ENCODE measurements at regions of chr12 and their contacts with region 1.

Region 1: DNA sequence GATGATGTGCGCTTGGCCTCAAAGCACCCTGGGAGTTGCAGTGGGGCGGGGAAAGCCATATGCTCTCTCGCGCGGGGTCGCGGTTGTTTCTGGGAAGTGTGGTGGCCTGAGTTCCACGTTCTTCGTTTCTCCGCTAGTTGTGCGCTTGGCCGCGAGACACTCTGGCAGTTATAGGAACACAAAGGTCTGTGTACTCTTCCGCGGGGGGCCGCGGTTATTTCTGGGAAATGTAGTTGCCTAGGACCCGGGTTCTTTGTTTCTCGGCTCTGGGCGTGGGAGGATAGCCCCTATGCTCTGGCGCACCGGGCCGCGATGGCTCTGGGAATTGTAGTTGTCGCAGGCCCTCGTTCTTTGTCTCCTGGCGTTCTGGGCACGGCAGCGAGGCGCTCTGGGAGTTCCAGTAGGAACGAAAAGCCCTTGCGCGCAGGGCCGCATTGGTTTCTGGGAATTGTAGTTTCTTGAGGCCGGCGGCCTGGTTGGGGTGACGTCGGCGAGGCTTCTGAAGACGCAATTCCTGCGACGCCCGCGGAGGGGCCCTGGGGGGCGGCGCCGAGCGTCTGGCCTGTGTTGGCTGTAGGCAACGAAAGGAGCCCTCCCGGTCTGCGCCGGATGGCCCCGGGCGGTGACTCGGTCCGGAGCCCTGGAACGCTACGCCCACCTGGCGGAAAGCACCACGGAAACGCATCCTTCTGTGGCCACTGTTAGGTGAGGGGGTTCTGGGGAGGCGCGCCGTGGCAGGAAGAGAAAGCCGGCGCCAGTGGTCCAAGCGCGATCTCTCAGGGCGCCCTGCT is at the start of gene ZNF140:
- DNase-seq: peak; percentile 94
- H3K4me3 Mint-ChIP-seq: no peak within 1 kb of the TSS
- H3K27ac Mint-ChIP-seq: peak within 1 kb of the TSS; percentile 68
- H3K4me1 Mint-ChIP-seq: peaks cover 17% of the 10 kb centered on the region
- H3K27me3 Mint-ChIP-seq: no peaks in the 10 kb centered on the region
- total RNA-seq, gene ZNF140: 14.6 to 16.2 TPM

Region 2: GRCh38 chr12:133145981-133146380 is 65.4 kb after region 1 on chr12:
- CTCF ChIA-PET with region 1: no interaction called
- POLR2A ChIA-PET with region 1: no interaction called
- DNase-seq: no peak
- H3K4me3 Mint-ChIP-seq: no peak overlapping the region
- H3K27ac Mint-ChIP-seq: no peak overlapping the region
- H3K4me1 Mint-ChIP-seq: no peaks in the 10 kb centered on the region
- H3K27me3 Mint-ChIP-seq: no peaks in the 10 kb centered on the region

Region 3: GRCh38 chr12:133181238-133181959 is 100.8 kb after region 1 on chr12 and contains the start of gene ZNF268:
- CTCF ChIA-PET with region 1: interaction called, 10 read pairs
- POLR2A ChIA-PET with region 1: no interaction called
- DNase-seq: peak; percentile 94
- H3K4me3 Mint-ChIP-seq: peak within 1 kb of the TSS; percentile 96
- H3K27ac Mint-ChIP-seq: peak within 1 kb of the TSS; percentile 97
- H3K4me1 Mint-ChIP-seq: peaks cover 21% of the 10 kb centered on the region
- H3K27me3 Mint-ChIP-seq: no peaks in the 10 kb centered on the region
- total RNA-seq, gene ZNF268: 22.1 to 23.4 TPM

Measured in activated CD4-positive, alpha-beta T cell treated with anti-CD3 and anti-CD28 coated beads, Interleukin-2, amount 10 ng/mL, durations not matched to agents 7 days and 5 days (primary cell).